AG04450 (cell line): ENCODE measurements at regions of chr2 and their contacts with region 1.

Region 1: DNA sequence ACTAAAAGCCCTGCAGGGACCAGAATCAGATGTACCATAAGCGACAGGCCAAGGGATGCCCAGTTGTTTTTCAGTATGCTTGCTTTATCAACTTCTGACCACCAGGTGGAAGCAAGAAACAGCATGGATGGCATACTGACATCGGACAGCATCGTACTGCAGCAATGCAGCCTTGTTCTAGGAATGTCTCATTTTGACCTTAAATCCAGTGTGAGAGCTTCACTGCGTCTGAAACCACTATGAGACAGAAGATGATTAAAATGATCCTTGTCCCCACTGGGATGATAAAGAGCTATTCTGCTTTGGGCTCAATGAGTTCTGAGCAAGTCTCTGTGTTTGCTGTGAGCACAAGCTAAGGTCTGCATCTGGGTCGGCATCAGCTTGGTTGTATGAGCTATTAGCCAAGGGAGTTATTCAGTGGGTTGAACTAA is 54.3 kb downstream of the CDK15 start:
- DNase-seq: peak; percentile 83
- H3K4me3 ChIP-seq: no peak overlapping the region
- H3K27ac ChIP-seq: no peak overlapping the region
- H3K27me3 ChIP-seq: no peaks in the 10 kb centered on the region
- CTCF ChIP-seq: peak; percentile 92

Region 2: DNA sequence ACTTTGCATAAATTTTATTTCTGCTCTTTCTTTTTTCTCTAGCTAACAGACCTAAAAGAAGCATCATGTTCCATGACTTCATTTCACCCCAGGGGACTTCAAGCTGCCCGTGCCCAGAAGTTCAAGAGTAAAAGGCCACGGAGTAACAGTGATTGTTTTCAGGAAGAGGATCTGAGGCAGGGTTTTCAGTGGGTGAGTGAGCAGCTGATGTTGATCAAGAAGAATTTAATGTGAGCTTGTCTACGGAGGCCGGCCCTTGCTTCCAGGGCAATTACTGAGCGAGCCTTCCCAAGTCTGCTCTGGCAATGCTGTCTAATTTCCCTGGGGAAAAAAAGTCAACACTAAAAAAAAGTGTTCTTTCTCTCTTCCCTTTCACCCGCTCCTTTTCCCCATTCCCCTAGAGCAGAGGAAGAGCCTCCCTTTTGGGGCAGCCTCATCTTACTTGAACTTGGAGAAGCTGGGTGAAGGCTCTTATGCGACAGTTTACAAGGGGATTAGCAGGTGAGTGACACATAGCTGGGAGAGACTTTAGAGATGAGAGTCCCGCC is 53.1 kb before region 1 on chr2:
- CTCF ChIA-PET with region 1: interaction called, 13 read pairs
- POLR2A ChIA-PET with region 1: interaction called, 4 read pairs
- DNase-seq: no peak
- H3K4me3 ChIP-seq: peak overlapping the region; percentile 51
- H3K27ac ChIP-seq: peak overlapping the region; percentile 40
- H3K27me3 ChIP-seq: no peaks in the 10 kb centered on the region
- CTCF ChIP-seq: no peak

Region 3: GRCh38 chr2:201909961-201910361 is 49.3 kb after region 1 on chr2:
- CTCF ChIA-PET with region 1: interaction called, 15 read pairs
- POLR2A ChIA-PET with region 1: interaction called, 4 read pairs
- DNase-seq: no peak
- H3K4me3 ChIP-seq: peak overlapping the region; percentile 60
- H3K27ac ChIP-seq: peak overlapping the region; percentile 91
- H3K27me3 ChIP-seq: no peaks in the 10 kb centered on the region
- CTCF ChIP-seq: no peak

Region 4: GRCh38 chr2:201926067-201926466 is 65.4 kb after region 1 on chr2:
- CTCF ChIA-PET with region 1: no interaction called
- POLR2A ChIA-PET with region 1: no interaction called
- DNase-seq: no peak
- H3K4me3 ChIP-seq: no peak overlapping the region
- H3K27ac ChIP-seq: no peak overlapping the region
- H3K27me3 ChIP-seq: no peaks in the 10 kb centered on the region
- CTCF ChIP-seq: no peak

Region 5: DNA sequence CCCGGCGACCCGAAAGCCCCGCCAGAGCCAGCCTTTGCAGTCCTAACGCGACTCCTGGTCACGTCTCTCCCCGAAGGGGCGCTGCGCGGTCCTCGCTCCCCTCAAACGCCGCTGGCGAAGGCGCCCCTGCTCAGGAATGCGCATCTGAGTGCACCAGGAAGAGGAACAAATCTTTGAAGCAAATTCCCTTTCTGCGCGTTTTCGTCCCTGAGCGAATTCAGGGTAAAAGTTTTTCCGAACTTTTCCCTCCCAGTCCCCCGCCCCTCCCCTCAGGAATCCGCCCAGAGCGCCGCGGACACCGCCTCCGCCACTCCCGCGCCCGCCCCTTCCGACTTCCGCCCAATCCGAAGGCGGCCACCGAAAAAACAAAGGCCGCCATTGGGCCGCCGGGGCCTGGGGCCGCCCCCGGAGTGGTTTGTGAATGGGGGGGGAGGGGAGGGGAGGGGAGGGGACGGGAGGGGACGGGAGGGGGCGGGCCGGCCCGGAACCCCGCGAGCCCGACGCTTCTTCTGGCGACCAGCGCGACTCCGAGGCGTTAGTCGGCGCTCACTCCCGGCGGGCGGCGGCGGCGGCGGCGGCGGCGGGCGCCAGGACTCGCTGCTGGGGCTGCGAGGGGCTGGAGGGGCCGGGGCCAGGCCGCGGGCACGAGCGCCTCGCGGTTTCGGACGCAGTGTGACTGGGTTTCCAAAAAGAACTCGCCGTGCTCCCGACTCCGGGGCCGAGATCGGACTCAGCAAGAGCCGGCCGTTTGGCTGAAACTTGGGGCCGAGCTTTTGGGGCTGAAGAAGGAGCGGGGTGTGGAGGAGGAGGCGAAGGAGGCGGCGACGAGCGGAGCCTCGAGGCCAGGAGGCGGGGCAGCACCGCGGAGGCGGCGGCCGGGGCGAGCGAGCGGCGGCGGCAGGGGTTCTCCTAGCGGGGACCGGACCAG is 172.9 kb after region 1 on chr2 and contains the start of gene FZD7:
- CTCF ChIA-PET with region 1: interaction called, 21 read pairs
- POLR2A ChIA-PET with region 1: interaction called, 12 read pairs
- DNase-seq: peak; percentile 87
- H3K4me3 ChIP-seq: peak within 1 kb of the TSS; percentile 88
- H3K27ac ChIP-seq: peak within 1 kb of the TSS; percentile 97
- H3K27me3 ChIP-seq: no peaks in the 10 kb centered on the region
- CTCF ChIP-seq: peak; percentile 15; the same call in 1 of the 2 replicates
- polyA plus RNA-seq, gene FZD7: 40.6 and 42.9 TPM in 2 replicates